ENCODE measurements at regions of chr13 and their contacts with region 1.

Region 1: DNA sequence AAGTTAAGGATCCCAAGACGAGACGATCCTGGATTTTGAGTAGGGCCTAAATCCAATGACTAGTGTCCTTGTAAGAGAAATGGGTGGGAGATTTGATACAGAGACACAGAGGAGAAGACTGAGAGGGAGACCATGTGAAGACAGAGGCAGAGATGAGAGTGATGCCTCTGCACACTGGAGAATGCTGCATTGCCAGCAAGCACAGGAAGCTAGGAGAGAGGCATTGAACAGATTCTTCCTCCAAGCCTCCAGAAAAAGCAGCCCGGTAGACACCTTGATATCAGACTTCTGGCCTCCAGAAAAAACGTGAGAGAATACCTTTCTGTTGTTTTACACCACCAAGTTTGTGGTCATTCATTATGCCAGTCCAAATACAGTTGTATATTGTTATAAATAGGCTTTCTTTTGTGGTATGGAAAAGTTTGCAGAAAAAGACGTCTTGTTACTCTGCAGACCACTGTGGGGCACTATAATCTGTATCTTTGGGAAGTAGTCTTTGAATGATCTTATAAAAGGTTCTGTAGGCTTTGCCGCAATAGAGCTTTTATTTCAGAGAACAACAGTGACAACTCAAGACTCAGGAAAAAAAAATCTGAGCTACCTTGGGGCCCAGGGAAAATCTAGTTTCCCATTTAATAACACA is 17.9 kb upstream of the RFC3 start:
- DNase-seq: no peak
- H3K4me3 ChIP-seq: no peak overlapping the region
- H3K27ac ChIP-seq: no peak overlapping the region
- H3K4me1 ChIP-seq: no peaks in the 10 kb centered on the region
- H3K27me3 ChIP-seq: no peaks in the 10 kb centered on the region
- CTCF ChIP-seq: no peak

Region 2: GRCh38 chr13:34076943-34077703 is 277.1 kb after region 1 on chr13:
- intact Hi-C with region 1: loop called (anchors 10 kb)
- DNase-seq: no peak
- H3K4me3 ChIP-seq: no peak overlapping the region
- H3K27ac ChIP-seq: no peak overlapping the region
- H3K4me1 ChIP-seq: no peaks in the 10 kb centered on the region
- H3K27me3 ChIP-seq: no peaks in the 10 kb centered on the region
- CTCF ChIP-seq: no peak